ENCODE measurements at regions of chr9 and their contacts with region 1.

Region 1: GRCh38 chr9:1320607-1321195 is 270.5 kb downstream of the DMRT2 start:
- DNase-seq: peak; percentile 57
- H3K4me3 ChIP-seq: no peak overlapping the region
- H3K27ac ChIP-seq: peak overlapping the region in 3 of 4 donors; percentile 25 to 28 (median 27)
- H3K4me1 ChIP-seq: peaks cover 0 to 5% (median 4%) of the 10 kb centered on the region in 4 donors
- H3K27me3 ChIP-seq: no peaks in the 10 kb centered on the region
- CTCF ChIP-seq: no peak
- EP300 ChIP-seq: no peak
- POLR2A ChIP-seq: no peak

Region 2: GRCh38 chr9:1222511-1222910 is 98.2 kb before region 1 on chr9:
- intact Hi-C with region 1: no loop called
- DNase-seq: no peak
- H3K4me3 ChIP-seq: no peak overlapping the region
- H3K27ac ChIP-seq: no peak overlapping the region
- H3K4me1 ChIP-seq: no peaks in the 10 kb centered on the region
- H3K27me3 ChIP-seq: no peaks in the 10 kb centered on the region
- CTCF ChIP-seq: no peak
- EP300 ChIP-seq: no peak
- POLR2A ChIP-seq: no peak

Region 3: GRCh38 chr9:1233568-1233967 is 87.1 kb before region 1 on chr9:
- intact Hi-C with region 1: no loop called
- DNase-seq: no peak
- H3K4me3 ChIP-seq: no peak overlapping the region
- H3K27ac ChIP-seq: no peak overlapping the region
- H3K4me1 ChIP-seq: peaks cover 0 to 17% (median 15%) of the 10 kb centered on the region in 4 donors
- H3K27me3 ChIP-seq: no peaks in the 10 kb centered on the region
- CTCF ChIP-seq: no peak
- EP300 ChIP-seq: no peak
- POLR2A ChIP-seq: no peak

Region 4: GRCh38 chr9:1373085-1373844 is 52.6 kb after region 1 on chr9:
- intact Hi-C with region 1: no loop called
- DNase-seq: no peak
- H3K4me3 ChIP-seq: no peak overlapping the region
- H3K27ac ChIP-seq: no peak overlapping the region
- H3K4me1 ChIP-seq: no peaks in the 10 kb centered on the region
- H3K27me3 ChIP-seq: no peaks in the 10 kb centered on the region
- CTCF ChIP-seq: no peak
- EP300 ChIP-seq: no peak
- POLR2A ChIP-seq: no peak

Region 5: DNA sequence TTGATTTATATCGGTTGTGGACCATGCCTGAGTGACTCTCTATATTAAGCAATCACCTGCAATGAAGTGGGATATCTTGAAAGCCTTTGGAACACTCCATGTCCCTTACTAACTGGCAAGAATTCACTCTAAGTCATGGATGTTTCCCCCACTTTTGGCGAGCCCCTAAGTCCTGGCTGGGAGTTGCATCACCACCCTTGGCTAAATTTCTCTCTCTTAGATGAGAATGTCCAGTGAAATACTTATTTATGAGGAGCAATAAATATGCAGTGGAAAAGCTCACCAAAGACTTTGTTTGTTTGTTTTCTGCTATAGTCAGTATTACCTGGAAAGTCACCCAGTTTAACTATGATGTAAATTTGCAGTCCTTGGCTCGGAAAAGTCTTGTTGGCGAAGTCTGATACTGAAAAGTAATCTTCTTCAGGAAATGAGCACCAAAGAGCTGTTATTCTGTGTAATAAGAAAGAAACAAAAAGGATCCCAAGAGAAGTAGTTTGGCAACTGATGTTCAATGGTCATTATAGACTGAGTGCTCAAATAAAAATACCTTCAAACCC is 63.3 kb after region 1 on chr9:
- intact Hi-C with region 1: loop called (anchors 10 kb)
- DNase-seq: no peak
- H3K4me3 ChIP-seq: no peak overlapping the region
- H3K27ac ChIP-seq: no peak overlapping the region
- H3K4me1 ChIP-seq: no peaks in the 10 kb centered on the region
- H3K27me3 ChIP-seq: no peaks in the 10 kb centered on the region
- CTCF ChIP-seq: no peak
- EP300 ChIP-seq: no peak
- POLR2A ChIP-seq: no peak

Measured in esophagus muscularis mucosa (tissue), 4 donors.